CD14-positive monocyte (primary cell): ENCODE measurements at regions of chr6 and their contacts with region 1.

Region 1: DNA sequence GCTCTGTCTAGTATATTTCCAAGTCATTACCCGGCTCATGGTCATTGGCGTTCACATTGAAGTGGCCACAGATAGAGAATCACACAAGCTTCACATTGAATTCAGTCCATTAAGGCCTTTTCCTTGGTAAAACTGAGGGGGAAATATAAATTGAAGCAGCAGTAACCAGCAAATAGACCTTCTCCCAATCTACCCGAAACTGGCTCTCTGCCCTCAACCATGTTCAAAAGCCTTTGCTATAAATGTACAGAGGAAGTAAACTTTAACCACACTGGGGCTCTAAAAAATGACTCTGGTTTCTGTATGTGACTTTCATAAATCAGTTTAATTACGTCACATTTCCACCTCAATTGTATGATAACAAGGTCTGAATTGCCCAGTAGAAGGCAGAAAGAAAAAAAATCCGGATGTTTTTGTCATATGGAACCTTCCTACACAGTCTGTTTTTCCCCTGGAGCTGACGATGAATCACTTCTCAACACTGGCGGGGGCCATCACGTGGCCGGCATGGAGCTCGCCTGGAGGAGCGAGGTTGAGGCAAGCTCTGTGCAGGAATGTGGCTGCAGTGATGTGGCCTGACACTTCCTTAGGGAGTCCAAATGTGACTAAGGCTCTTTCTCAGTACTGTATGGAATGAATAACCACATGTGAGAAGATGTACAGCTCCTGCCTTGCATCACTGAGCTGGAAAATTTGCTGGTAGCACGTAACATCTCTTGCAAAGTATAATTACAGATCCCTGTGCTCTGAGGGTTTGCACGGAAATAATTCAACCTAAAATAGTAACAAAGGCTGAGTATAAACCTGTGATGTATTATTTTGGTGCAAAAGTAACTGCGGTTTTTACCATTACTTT is 58.6 kb upstream of the SNX9 start:
- DNase-seq: peak; percentile 95 to 100 (median 100)
- H3K4me3 ChIP-seq: peak overlapping the region in 2 of 3 experiments; percentile 26 to 45
- H3K4me3 Mint-ChIP-seq: peak overlapping the region; percentile 47 to 80
- H3K27ac ChIP-seq: peak overlapping the region; percentile 43 to 92
- H3K27ac Mint-ChIP-seq: peak overlapping the region; percentile 93 to 98 (median 97)
- H3K4me1 ChIP-seq: peaks cover 59 to 64% of the 10 kb centered on the region in 2 donors
- H3K4me1 Mint-ChIP-seq: peaks cover 73% of the 10 kb centered on the region
- H3K27me3 ChIP-seq: no peaks in the 10 kb centered on the region
- H3K27me3 Mint-ChIP-seq: peaks cover 4 to 16% (median 9%) of the 10 kb centered on the region in 3 donors
- CTCF ChIP-seq: no peak

Region 2: DNA sequence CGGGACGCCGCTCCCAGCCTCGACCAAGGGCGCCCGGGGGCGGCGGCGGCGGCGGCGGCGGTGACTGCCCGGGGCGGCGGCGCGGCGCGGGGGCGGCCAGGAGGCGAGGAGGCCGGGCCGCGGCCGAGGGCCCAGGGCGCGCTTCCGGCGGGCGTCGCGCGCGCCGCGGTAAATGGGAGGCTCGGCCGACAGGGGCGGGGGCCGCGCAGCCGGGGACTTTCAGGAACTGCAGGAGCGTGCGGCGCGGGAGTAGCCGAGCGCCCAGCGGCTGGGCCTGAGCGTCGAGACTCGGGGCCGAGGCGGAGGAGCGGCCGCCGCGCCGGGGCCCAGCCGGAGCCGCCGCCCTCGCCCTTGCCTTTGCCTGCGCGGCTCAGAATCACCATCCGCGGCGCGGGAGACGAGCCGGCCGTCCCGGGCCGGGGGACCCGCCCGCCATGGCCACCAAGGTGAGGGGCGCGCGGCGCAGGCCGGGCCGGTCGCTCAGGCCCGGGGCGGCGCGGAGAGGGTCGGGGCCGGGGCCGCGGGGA is 58.7 kb after region 1 on chr6 and contains the start of gene SNX9:
- intact Hi-C with region 1: loop called (anchors 5 kb)
- DNase-seq: peak; percentile 75 to 87 (median 78)
- H3K4me3 ChIP-seq: peak within 1 kb of the TSS; percentile 72 to 92 (median 92)
- H3K4me3 Mint-ChIP-seq: peak within 1 kb of the TSS; percentile 95 to 97
- H3K27ac ChIP-seq: peak within 1 kb of the TSS in 1 of 2 donors; percentile 83
- H3K27ac Mint-ChIP-seq: peak within 1 kb of the TSS; percentile 66 to 94 (median 92)
- H3K4me1 ChIP-seq: peaks cover 13 to 21% of the 10 kb centered on the region in 2 donors
- H3K4me1 Mint-ChIP-seq: peaks cover 19% of the 10 kb centered on the region
- H3K27me3 ChIP-seq: peaks cover 9 to 29% of the 10 kb centered on the region in 2 donors
- H3K27me3 Mint-ChIP-seq: peaks cover 35 to 56% (median 37%) of the 10 kb centered on the region in 3 donors
- CTCF ChIP-seq: no peak
- polyA plus RNA-seq, gene SNX9: 5.5 to 8.1 (median 7.2) TPM

Region 3: DNA sequence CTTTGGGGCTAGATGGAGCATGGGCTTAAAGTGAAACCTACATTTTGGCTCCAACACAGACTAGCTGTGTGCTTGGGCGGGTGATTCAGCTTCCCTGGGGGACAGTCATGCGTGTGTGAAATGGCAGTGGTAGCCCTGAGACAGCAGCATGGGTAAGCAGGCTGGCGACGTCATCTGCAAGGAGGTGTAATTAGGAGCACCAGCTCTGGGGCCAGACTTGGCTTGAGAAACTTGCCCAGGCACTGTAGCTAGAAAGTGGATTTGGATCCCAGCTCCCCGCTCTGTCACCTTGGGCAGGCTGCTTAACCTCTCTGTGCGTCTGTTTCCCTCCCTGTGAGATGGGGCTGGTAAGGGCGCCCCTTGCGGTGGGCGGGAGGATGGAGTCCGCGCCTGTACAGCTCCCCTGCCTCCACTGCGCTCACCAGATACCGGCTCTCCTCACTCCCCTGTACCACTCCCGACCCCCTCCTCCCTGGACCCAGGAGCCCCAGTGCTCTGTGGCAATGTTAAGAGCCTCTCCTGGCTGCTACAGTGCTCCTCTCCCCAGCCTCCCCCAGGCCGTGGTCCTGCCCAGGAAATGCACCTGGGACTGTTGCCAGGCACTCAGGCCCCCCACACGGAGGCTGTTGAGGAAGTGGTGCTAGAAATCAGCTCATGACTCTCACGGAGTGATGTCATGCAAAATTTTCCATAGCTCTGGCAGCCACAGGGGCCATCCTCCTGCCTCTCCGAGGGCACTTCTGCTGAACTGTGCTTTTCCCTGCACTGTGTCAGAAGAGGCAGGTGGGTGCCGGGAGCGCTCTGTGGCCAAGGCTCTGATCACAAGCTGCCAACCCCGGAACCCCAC is 261.9 kb after region 1 on chr6:
- intact Hi-C with region 1: loop called in 1 of 2 experiments (anchors 2 kb)
- DNase-seq: peak; percentile 90 to 98 (median 93)
- H3K4me3 ChIP-seq: peak overlapping the region in 2 of 3 experiments; percentile 16 to 19
- H3K4me3 Mint-ChIP-seq: peak overlapping the region; percentile 64 to 79
- H3K27ac ChIP-seq: peak overlapping the region; percentile 40 to 66
- H3K27ac Mint-ChIP-seq: peak overlapping the region; percentile 76 to 97 (median 95)
- H3K4me1 ChIP-seq: peaks cover 36 to 56% of the 10 kb centered on the region in 2 donors
- H3K4me1 Mint-ChIP-seq: peaks cover 36% of the 10 kb centered on the region
- H3K27me3 ChIP-seq: no peaks in the 10 kb centered on the region
- H3K27me3 Mint-ChIP-seq: peaks cover 2 to 8% (median 6%) of the 10 kb centered on the region in 3 donors
- CTCF ChIP-seq: peak; percentile 65

Region 4: GRCh38 chr6:158057213-158057987 is 293.0 kb after region 1 on chr6:
- intact Hi-C with region 1: loop called in 1 of 2 experiments (anchors 10 kb)
- DNase-seq: peak; percentile 94 to 99 (median 96)
- H3K4me3 ChIP-seq: peak overlapping the region in 1 of 3 experiments; percentile 8
- H3K4me3 Mint-ChIP-seq: peak overlapping the region; percentile 32 to 56
- H3K27ac ChIP-seq: peak overlapping the region; percentile 88 to 93
- H3K27ac Mint-ChIP-seq: peak overlapping the region; percentile 88 to 98 (median 95)
- H3K4me1 ChIP-seq: peaks cover 40 to 42% of the 10 kb centered on the region in 2 donors
- H3K4me1 Mint-ChIP-seq: peaks cover 31% of the 10 kb centered on the region
- H3K27me3 ChIP-seq: no peaks in the 10 kb centered on the region
- H3K27me3 Mint-ChIP-seq: peaks cover 1 to 3% (median 2%) of the 10 kb centered on the region in 3 donors
- CTCF ChIP-seq: no peak

Region 5: GRCh38 chr6:158086504-158087223 is 322.3 kb after region 1 on chr6:
- intact Hi-C with region 1: loop called in 1 of 2 experiments (anchors 10 kb)
- DNase-seq: peak; percentile 73 to 78 (median 75)
- H3K4me3 ChIP-seq: peak overlapping the region; percentile 40 to 76 (median 58)
- H3K4me3 Mint-ChIP-seq: peak overlapping the region; percentile 83 to 90
- H3K27ac ChIP-seq: peak overlapping the region; percentile 95 to 99
- H3K27ac Mint-ChIP-seq: peak overlapping the region; percentile 94 to 99 (median 98)
- H3K4me1 ChIP-seq: peaks cover 51 to 61% of the 10 kb centered on the region in 2 donors
- H3K4me1 Mint-ChIP-seq: peaks cover 68% of the 10 kb centered on the region
- H3K27me3 ChIP-seq: no peaks in the 10 kb centered on the region
- H3K27me3 Mint-ChIP-seq: peaks cover 0 to 3% (median 1%) of the 10 kb centered on the region in 3 donors
- CTCF ChIP-seq: no peak